T-cell (primary cell): ENCODE measurements at regions of chr11 and their contacts with region 1.

Region 1: GRCh38 chr11:61871158-61871597 is 20.2 kb downstream of the FADS3 start:
- DNase-seq: peak; percentile 16 to 76 (median 56)
- ATAC-seq: peak; percentile 85 to 98 (median 88)
- H3K4me3 ChIP-seq: peak overlapping the region in 1 of 2 donors; percentile 52
- H3K4me3 Mint-ChIP-seq: peak overlapping the region; percentile 52 to 67 (median 62)
- H3K27ac ChIP-seq: no peak overlapping the region
- H3K27ac Mint-ChIP-seq: no peak overlapping the region
- H3K4me1 ChIP-seq: peaks cover 0 to 7% of the 10 kb centered on the region in 2 experiments
- H3K4me1 Mint-ChIP-seq: peaks cover 6 to 8% (median 7%) of the 10 kb centered on the region in 3 donors
- H3K27me3 ChIP-seq: peaks cover 0 to 24% of the 10 kb centered on the region in 2 experiments
- H3K27me3 Mint-ChIP-seq: peaks cover 0 to 7% of the 10 kb centered on the region in 2 donors

Region 2: DNA sequence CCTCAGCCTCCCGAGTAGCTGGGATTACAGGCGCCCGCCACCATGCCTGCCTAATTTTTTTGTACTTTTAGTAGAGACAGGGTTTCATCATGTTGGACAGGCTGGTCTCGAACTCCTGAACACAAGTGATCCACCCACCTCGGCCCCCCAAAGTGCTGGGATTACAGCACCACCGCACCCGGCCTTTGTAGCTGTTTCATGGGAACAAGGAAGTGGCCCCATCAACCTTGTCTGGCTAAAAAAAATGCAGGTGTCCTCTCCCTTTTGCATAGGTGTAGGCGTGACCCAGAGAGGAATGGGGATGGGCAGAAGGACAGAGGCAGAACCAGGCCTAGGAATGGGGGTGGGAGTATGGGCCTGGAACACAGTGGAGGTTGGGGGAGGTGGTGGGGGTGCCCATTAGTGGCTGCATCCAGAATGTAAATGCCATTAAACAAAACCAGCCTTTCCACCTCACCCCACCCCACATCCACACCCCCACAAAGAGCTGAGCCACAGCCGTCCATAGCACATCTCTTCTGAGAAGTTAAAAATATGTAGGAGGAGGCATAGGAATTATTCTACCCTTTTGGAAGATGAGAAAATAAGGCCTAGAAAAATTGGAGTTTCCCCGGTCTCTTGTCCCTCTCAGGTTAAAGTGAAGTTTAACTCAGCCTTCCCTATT is 524.8 kb after region 1 on chr11:
- CTCF ChIA-PET with region 1: interaction called in 1 of 2 experiments, 14 read pairs
- POLR2A ChIA-PET with region 1: no interaction called
- DNase-seq: no peak
- ATAC-seq: no peak
- H3K4me3 ChIP-seq: no peak overlapping the region
- H3K4me3 Mint-ChIP-seq: no peak overlapping the region
- H3K27ac ChIP-seq: no peak overlapping the region
- H3K27ac Mint-ChIP-seq: no peak overlapping the region
- H3K4me1 ChIP-seq: peaks cover 15 to 31% of the 10 kb centered on the region in 2 experiments
- H3K4me1 Mint-ChIP-seq: peaks cover 26 to 45% (median 37%) of the 10 kb centered on the region in 3 donors
- H3K27me3 ChIP-seq: no peaks in the 10 kb centered on the region
- H3K27me3 Mint-ChIP-seq: no peaks in the 10 kb centered on the region